ENCODE measurements at regions of chr11 and their contacts with region 1.

Region 1: GRCh38 chr11:88799771-88800500 is 265.8 kb downstream of the GRM5 start:
- DNase-seq: no peak
- ATAC-seq: no peak
- H3K4me3 ChIP-seq: no peak overlapping the region
- H3K27ac ChIP-seq: no peak overlapping the region
- H3K4me1 ChIP-seq: no peaks in the 10 kb centered on the region
- H3K27me3 ChIP-seq: no peaks in the 10 kb centered on the region
- CTCF ChIP-seq: no peak

Region 2: DNA sequence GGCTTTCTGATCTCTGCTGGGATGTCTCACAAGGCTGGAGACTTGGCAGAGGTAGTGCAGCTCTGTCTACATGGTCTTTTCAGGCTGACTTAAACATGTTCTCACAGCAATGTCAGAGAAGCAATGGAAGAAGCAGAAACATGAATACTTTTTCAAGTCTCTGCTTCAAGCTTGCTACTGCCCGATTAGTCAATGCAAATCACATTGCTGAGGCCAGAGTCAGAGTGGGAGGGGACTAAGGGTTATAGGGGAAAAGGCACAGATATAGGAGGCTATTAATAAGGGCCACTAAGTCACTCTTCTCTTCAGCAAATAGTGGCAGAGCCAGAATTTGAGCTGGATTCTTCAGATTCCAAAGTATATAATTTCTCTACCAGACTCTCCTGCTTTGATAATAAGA is 1371.7 kb before region 1 on chr11:
- CTCF ChIA-PET with region 1: no interaction called
- POLR2A ChIA-PET with region 1: interaction called, 13 read pairs
- intact Hi-C with region 1: no loop called
- DNase-seq: peak; percentile 91
- ATAC-seq: peak; percentile 82
- H3K4me3 ChIP-seq: peak overlapping the region; percentile 13; the same call in 1 of the 2 replicates
- H3K27ac ChIP-seq: peak overlapping the region; percentile 11; the same call in 1 of the 2 replicates
- H3K4me1 ChIP-seq: peaks cover 38% of the 10 kb centered on the region
- H3K27me3 ChIP-seq: no peaks in the 10 kb centered on the region
- CTCF ChIP-seq: no peak

Region 3: GRCh38 chr11:88739524-88739923 is 60.4 kb before region 1 on chr11:
- CTCF ChIA-PET with region 1: no interaction called
- POLR2A ChIA-PET with region 1: no interaction called
- intact Hi-C with region 1: no loop called
- DNase-seq: no peak
- ATAC-seq: no peak
- H3K4me3 ChIP-seq: no peak overlapping the region
- H3K27ac ChIP-seq: no peak overlapping the region
- H3K4me1 ChIP-seq: no peaks in the 10 kb centered on the region
- H3K27me3 ChIP-seq: no peaks in the 10 kb centered on the region
- CTCF ChIP-seq: no peak

Region 4: GRCh38 chr11:88770475-88771079 is 29.4 kb before region 1 on chr11:
- CTCF ChIA-PET with region 1: no interaction called
- POLR2A ChIA-PET with region 1: no interaction called
- intact Hi-C with region 1: no loop called
- DNase-seq: no peak
- ATAC-seq: no peak
- H3K4me3 ChIP-seq: no peak overlapping the region
- H3K27ac ChIP-seq: no peak overlapping the region
- H3K4me1 ChIP-seq: no peaks in the 10 kb centered on the region
- H3K27me3 ChIP-seq: no peaks in the 10 kb centered on the region
- CTCF ChIP-seq: no peak